ENCODE measurements at regions of chr17 and their contacts with region 1.

Region 1: DNA sequence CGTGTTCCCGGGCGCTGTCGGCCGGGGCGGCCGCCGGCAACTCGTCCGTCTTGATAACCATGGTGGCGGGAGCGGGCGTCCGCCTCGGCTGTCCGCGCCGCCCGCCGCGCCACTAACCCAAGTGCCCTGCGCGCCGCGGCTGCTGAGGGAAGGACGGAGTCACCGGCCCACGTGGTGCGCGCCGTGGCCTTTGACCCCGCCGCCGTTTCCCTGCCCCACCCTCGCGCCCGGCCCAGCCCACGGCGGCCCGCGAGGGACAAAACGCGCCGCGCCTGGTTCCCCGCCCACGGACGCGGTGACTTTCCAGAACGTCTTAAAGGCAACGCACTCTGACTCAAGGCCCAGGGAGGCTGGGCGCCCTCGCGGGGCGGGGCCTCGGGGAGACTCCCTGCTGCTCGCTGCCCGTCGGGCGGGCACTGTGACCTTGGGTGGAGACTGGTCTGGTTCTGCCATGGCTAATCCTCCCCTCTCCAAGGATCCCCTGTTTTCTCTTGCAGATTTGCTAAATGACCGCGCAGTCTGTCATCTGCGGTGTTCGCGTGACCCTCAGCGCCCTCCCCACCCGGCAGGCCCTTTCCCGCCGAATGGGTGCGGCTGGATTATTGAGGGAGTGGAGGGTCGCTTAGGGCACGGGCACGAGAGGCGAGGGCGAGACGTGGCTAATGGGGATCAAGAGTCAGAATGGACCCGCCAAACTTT is at the start of gene CLUH:
- DNase-seq: peak; percentile 83 to 98
- H3K4me3 ChIP-seq: peak within 1 kb of the TSS; percentile 82
- H3K27ac ChIP-seq: peak within 1 kb of the TSS; percentile 63
- H3K4me1 ChIP-seq: peaks cover 27% of the 10 kb centered on the region; the same call in 1 of the 2 replicates
- H3K27me3 ChIP-seq: no peaks in the 10 kb centered on the region
- CTCF ChIP-seq: no peak
- total RNA-seq, gene CLUH: 142 and 165 TPM in 2 replicates

Region 2: DNA sequence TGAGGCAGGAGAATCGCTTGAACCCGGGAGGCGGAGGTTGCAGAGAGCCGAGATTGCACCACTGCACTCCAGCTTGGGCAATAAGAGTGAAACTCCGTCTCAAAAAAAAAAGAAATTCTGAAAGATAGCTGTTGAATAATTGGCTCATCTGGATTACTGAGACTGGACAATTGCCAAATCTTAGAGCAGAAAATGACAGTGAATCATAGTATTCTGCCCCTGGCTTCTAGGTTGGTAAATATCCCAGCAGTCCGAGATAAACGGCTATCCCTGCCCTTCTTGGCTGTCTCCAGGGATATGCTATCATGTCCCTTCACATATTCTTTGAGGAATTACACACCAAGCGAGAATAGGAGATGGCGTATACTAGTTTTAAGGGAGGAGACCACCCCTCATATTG is 164.6 kb before region 1 on chr17:
- CTCF ChIA-PET with region 1: no interaction called
- POLR2A ChIA-PET with region 1: interaction called, 15 read pairs
- intact Hi-C with region 1: no loop called
- DNase-seq: no peak
- H3K4me3 ChIP-seq: no peak overlapping the region
- H3K27ac ChIP-seq: no peak overlapping the region
- H3K4me1 ChIP-seq: 0 out of 2 replicates have a peak, but pooled peaks cover 8% of the 10 kb centered on the region
- H3K27me3 ChIP-seq: no peaks in the 10 kb centered on the region
- CTCF ChIP-seq: no peak

Region 3: DNA sequence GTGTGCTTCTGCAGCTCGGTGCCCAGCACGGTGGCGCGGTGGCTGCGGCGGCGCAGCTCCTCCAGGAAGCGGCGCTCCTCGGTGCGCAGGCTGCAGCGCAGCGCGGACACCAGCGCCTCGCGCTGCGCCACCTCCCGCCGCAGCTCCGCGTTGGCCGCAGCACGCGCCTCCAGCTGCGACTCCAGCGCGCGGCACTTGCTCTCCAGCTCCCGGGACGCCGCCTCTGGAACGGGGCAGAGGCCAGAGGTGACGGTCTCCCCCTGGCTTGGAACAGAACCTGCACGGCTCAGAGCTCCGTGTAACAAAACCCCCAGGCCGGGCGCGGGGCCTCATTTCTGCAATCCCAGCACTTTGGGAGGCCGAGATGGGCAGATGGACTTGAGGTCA is 13.0 kb after region 1 on chr17:
- CTCF ChIA-PET with region 1: no interaction called
- POLR2A ChIA-PET with region 1: interaction called, 11 read pairs
- intact Hi-C with region 1: no loop called
- DNase-seq: no peak
- H3K4me3 ChIP-seq: no peak overlapping the region
- H3K27ac ChIP-seq: no peak overlapping the region
- H3K4me1 ChIP-seq: no peaks in the 10 kb centered on the region
- H3K27me3 ChIP-seq: peaks cover 21% of the 10 kb centered on the region
- CTCF ChIP-seq: no peak

Region 4: GRCh38 chr17:3256575-3256974 is 544.8 kb after region 1 on chr17:
- CTCF ChIA-PET with region 1: no interaction called
- POLR2A ChIA-PET with region 1: no interaction called
- intact Hi-C with region 1: no loop called
- DNase-seq: no peak
- H3K4me3 ChIP-seq: no peak overlapping the region
- H3K27ac ChIP-seq: no peak overlapping the region
- H3K4me1 ChIP-seq: no peaks in the 10 kb centered on the region
- H3K27me3 ChIP-seq: peaks cover 67% of the 10 kb centered on the region
- CTCF ChIP-seq: no peak